ENCODE measurements at regions of chr9 and their contacts with region 1.

Region 1: GRCh38 chr9:126500684-126501382 is 112.9 kb upstream of the LMX1B start:
- DNase-seq: peak; percentile 89

Region 2: GRCh38 chr9:126055381-126055985 is 445.4 kb before region 1 on chr9:
- intact Hi-C with region 1: no loop called
- DNase-seq: peak; percentile 58

Region 3: GRCh38 chr9:126558051-126558665 is 57.3 kb after region 1 on chr9:
- intact Hi-C with region 1: loop called (anchors 1 kb)
- DNase-seq: peak; percentile 85

Region 4: GRCh38 chr9:126690431-126691350 is 189.9 kb after region 1 on chr9:
- intact Hi-C with region 1: loop called (anchors 5 kb)
- DNase-seq: no peak

Region 5: DNA sequence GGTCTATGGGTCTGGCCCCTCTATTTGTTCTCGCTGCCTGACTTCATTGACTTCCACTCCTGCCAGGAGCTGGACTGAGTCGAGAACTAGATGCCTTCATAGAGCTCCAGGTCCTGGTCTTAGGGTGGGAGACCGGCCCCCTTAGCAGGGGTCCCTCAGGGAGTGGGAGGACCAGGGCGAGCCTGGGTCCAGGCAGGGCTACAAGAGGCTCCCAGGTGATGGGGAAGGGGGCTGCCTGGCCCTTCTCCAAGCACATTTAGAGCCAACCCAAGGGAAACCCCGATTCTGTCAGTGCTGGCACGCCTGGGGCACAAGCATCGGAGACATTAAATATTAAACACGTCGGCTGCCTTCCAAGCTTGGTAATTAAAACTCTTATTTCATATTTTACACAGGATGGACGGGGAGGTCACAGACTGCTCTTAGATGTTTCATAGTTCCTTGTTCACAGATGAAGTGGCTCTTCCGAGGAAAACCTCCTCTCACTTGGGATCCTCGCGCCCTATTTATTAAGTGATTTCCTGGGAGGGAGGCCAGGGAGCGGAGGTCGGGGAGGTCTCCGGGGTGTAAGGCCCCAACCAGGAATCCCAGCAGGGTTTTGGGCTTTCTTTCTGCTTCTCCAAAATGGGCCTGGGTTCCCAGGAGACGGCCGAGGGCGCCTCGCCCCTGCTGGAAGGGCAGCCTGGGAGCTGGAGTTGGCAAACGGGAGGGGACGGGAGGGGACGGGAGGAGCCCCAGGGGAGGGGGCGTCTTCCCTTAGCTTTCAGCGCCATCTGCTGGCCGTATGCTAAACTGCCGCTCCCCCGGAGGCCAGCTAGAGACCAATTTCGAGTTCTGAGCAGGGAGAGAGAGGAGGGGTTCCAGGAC is 280.6 kb after region 1 on chr9:
- intact Hi-C with region 1: loop called (anchors 2 kb)
- DNase-seq: peak; percentile 85

Measured in cardiac septum (tissue), 1 donor.